MCF 10A (cell line): ENCODE measurements at regions of chrX and their contacts with region 1.

Region 1: DNA sequence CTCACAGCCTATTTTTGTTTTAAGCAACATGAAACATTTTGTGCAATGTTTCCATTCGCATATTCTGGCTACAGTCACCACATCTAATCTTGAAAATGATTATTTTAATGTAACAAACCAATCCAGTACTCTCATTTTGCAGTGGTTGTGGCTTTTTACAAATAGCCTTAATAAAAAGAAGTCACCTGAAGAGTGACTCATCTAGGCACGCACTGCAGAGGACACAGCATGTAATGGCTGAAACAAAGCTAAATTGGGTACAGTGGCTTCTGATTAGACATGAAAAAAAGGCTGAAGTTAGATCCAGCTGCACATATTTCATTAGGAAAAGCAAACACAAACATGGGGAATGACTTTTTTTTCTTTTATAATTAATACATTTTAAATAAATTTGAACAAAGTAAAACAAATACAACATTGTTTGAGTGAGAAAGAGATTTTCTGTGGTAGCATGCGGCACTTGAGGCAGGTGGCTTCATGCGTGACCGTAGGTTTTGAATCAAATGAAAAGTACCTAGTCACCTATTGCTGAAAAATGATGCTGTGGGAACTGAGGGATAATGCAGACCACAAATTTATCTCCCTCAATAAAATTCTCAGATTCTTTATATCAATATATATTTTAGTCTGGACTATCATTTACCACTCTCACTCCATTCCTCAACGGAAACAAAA is 240.8 kb upstream of the DDX53 start:
- DNase-seq: no peak
- H3K4me3 Mint-ChIP-seq: no peak overlapping the region
- H3K27ac Mint-ChIP-seq: no peak overlapping the region
- H3K4me1 Mint-ChIP-seq: no peaks in the 10 kb centered on the region
- H3K27me3 Mint-ChIP-seq: peaks cover 8% of the 10 kb centered on the region
- CTCF ChIP-seq: no peak

Region 2: GRCh38 chrX:22666441-22666840 is 92.5 kb before region 1 on chrX:
- CTCF ChIA-PET with region 1: no interaction called
- POLR2A ChIA-PET with region 1: no interaction called
- intact Hi-C with region 1: no loop called
- DNase-seq: peak; percentile 30
- H3K4me3 Mint-ChIP-seq: no peak overlapping the region
- H3K27ac Mint-ChIP-seq: no peak overlapping the region
- H3K4me1 Mint-ChIP-seq: no peaks in the 10 kb centered on the region
- H3K27me3 Mint-ChIP-seq: peaks cover 25% of the 10 kb centered on the region
- CTCF ChIP-seq: no peak

Region 3: GRCh38 chrX:22730542-22730941 is 28.4 kb before region 1 on chrX:
- CTCF ChIA-PET with region 1: interaction called, 10 read pairs
- POLR2A ChIA-PET with region 1: no interaction called
- intact Hi-C with region 1: no loop called
- DNase-seq: no peak
- H3K4me3 Mint-ChIP-seq: no peak overlapping the region
- H3K27ac Mint-ChIP-seq: no peak overlapping the region
- H3K4me1 Mint-ChIP-seq: no peaks in the 10 kb centered on the region
- H3K27me3 Mint-ChIP-seq: peaks cover 75% of the 10 kb centered on the region
- CTCF ChIP-seq: no peak